PC-9 (cell line): ENCODE measurements at regions of chr7 and their contacts with region 1.

Region 1: DNA sequence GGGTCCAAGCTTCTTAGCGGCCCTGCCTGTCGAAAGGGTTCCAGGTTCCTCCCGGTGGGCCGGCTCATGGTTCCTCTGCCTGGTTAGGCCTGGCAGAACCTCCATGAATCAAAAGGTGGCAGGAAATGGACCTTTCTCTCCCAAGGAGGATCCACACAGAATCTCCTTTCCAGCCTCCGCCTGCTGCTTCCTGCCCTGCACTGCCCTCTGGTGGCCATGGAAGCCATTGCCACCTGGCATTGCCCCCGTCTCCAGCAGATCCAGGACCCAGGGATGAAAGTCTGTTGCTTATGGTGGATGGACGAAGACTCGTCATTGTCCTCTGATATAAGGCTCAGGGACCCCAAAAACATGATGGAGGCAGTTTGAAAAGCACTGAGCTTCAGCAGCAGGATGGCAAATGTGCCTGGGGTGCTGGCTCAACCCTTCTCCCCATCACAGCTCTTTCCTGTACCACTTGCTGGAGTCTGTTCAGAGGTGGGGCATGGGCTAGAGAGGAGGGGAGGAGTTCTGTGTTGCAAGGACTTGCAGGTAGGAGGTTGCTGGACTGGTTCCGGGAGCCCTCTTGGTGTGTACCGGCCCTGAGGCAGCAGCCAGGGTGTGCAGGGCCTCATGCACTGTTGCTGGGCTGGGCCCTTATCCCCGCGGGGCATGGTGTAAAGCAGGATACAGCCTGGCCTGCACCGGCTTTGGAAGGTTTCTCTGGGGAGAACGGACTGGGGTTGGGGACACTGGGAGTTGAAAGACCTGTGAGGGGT is 11.3 kb upstream of the INMT start:
- DNase-seq: peak; percentile 63 to 85
- H3K4me3 ChIP-seq: no peak overlapping the region
- H3K27ac ChIP-seq: no peak overlapping the region
- H3K4me1 ChIP-seq: 0 out of 2 replicates have a peak, but pooled peaks cover 4% of the 10 kb centered on the region
- H3K27me3 ChIP-seq: peaks cover 35% of the 10 kb centered on the region
- CTCF ChIP-seq: peak; percentile 100

Region 2: GRCh38 chr7:28921822-28922221 is 1818.8 kb before region 1 on chr7:
- CTCF ChIA-PET with region 1: no interaction called
- POLR2A ChIA-PET with region 1: no interaction called
- intact Hi-C with region 1: loop called (anchors 2 kb)
- DNase-seq: peak; percentile 29 to 65
- H3K4me3 ChIP-seq: no peak overlapping the region
- H3K27ac ChIP-seq: no peak overlapping the region
- H3K4me1 ChIP-seq: peaks cover 10% of the 10 kb centered on the region; the same call in 1 of the 2 replicates
- H3K27me3 ChIP-seq: no peaks in the 10 kb centered on the region
- CTCF ChIP-seq: peak; percentile 97

Region 3: GRCh38 chr7:30276203-30276900 is 464.3 kb before region 1 on chr7:
- CTCF ChIA-PET with region 1: no interaction called
- POLR2A ChIA-PET with region 1: no interaction called
- intact Hi-C with region 1: loop called (anchors 2 kb)
- DNase-seq: peak in 1 of 2 experiments; percentile 37
- H3K4me3 ChIP-seq: no peak overlapping the region
- H3K27ac ChIP-seq: no peak overlapping the region
- H3K4me1 ChIP-seq: no peaks in the 10 kb centered on the region
- H3K27me3 ChIP-seq: no peaks in the 10 kb centered on the region
- CTCF ChIP-seq: peak; percentile 73

Region 4: GRCh38 chr7:30548762-30549344 is 191.8 kb before region 1 on chr7:
- CTCF ChIA-PET with region 1: interaction called, 4 read pairs
- POLR2A ChIA-PET with region 1: interaction called, 7 read pairs
- intact Hi-C with region 1: loop called (anchors 1 kb)
- DNase-seq: peak; percentile 61 to 73
- H3K4me3 ChIP-seq: no peak overlapping the region
- H3K27ac ChIP-seq: no peak overlapping the region
- H3K4me1 ChIP-seq: peaks cover 32% of the 10 kb centered on the region
- H3K27me3 ChIP-seq: no peaks in the 10 kb centered on the region
- CTCF ChIP-seq: peak; percentile 93

Region 5: DNA sequence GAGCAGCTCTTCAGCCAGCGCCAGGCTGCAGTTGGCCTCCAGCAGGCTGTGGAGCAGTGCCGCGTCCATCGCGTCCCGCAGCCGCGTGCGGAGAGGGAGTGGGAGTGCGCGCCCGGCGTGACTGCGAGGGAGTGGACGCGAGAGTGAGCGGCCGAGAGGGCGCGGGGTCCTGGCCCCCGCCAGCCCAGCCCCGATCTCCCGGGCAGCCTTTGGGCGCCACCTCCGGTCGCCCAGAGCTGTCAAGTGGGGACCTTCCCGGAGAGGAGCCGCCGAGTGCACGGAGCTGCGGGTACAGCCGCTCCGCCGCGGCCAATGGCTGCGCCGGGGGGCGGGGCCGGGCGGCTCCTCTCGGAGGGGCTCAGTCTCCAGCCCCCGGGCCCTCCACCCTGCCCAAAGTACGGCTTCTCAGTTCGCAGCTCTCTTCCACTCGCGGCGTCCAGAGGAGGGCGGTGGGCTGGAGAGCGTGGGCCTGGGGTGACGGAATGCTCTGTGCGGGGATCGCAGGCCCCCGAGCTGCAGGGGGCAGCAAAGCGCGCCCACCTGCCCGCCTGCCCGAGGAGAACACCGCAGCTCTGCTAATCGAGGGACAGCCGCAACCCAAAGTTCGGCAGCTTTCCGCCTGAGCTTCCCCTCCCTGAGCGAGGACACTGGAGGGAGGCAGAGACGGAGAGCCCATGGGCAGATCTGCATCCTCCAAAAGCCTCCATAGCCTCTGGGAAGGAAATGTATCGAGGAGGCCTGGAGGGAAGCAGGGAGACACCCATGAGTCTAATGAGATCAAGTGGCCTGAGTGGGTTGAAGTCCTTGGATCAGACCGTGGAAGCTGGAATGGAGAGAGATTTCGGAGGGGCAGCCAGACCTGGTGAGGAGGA is 58.2 kb before region 1 on chr7 and contains the start of gene CRHR2:
- CTCF ChIA-PET with region 1: no interaction called
- POLR2A ChIA-PET with region 1: no interaction called
- intact Hi-C with region 1: loop called (anchors 2 kb)
- DNase-seq: no peak
- H3K4me3 ChIP-seq: no peak within 1 kb of the TSS
- H3K27ac ChIP-seq: no peak within 1 kb of the TSS
- H3K4me1 ChIP-seq: no peaks in the 10 kb centered on the region
- H3K27me3 ChIP-seq: peaks cover 75% of the 10 kb centered on the region
- CTCF ChIP-seq: no peak
- total RNA-seq, gene CRHR2: not detected in 2 replicates

Region 6: DNA sequence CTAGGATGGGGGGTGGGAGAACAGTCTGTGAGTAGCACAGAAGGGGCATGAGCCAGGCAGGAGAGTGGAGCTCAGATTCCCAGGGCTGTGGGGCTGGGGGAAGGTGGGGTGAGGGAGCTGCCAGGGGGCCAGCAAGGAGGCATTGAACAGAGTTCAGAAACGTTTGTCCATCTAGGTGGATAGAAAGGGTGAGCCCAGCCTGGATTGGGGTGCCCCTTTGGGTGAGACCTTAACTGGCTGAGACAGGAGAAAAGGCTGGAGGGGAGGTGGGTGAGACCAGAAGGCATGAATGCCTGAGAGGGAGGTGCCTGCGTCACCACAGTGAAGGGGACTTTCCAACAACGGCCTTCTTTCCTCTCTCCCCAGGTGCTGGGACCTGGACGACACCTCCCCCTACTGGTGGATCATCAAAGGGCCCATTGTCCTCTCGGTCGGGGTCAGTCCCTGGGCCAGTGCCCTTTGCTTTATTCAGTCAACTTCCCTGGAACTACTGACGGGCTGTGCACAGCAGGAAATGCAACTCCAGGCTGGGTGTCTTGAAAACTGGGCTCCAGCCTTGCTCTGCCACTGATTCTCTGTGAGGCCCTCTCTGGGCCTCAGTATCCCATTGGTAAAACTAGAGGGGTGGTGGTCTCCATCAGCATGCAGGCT is 234.1 kb after region 1 on chr7:
- CTCF ChIA-PET with region 1: no interaction called
- POLR2A ChIA-PET with region 1: no interaction called
- intact Hi-C with region 1: loop called (anchors 1 kb)
- DNase-seq: peak; percentile 52 to 74
- H3K4me3 ChIP-seq: no peak overlapping the region
- H3K27ac ChIP-seq: no peak overlapping the region
- H3K4me1 ChIP-seq: no peaks in the 10 kb centered on the region
- H3K27me3 ChIP-seq: peaks cover 40% of the 10 kb centered on the region
- CTCF ChIP-seq: peak; percentile 88